T-cell (primary cell): ENCODE measurements at regions of chr1 and their contacts with region 1.

Region 1: GRCh38 chr1:19661721-19662228 is 2.9 kb upstream of the HTR6 start:
- DNase-seq: peak in 19 of 35 experiments; percentile 17 to 80 (median 42)
- ATAC-seq: peak in 2 of 4 experiments; percentile 21 to 24
- H3K4me3 ChIP-seq: no peak overlapping the region
- H3K4me3 Mint-ChIP-seq: no peak overlapping the region
- H3K27ac ChIP-seq: no peak overlapping the region
- H3K27ac Mint-ChIP-seq: peak overlapping the region in 1 of 2 donors; percentile 67
- H3K4me1 ChIP-seq: peaks cover 0 to 34% of the 10 kb centered on the region in 2 experiments
- H3K4me1 Mint-ChIP-seq: peaks cover 23 to 33% (median 28%) of the 10 kb centered on the region in 3 donors
- H3K27me3 ChIP-seq: peaks cover 5 to 41% of the 10 kb centered on the region in 2 experiments
- H3K27me3 Mint-ChIP-seq: peaks cover 5 to 14% of the 10 kb centered on the region in 2 donors

Region 2: GRCh38 chr1:19704247-19705113 is 42.7 kb after region 1 on chr1:
- CTCF ChIA-PET with region 1: interaction called, 49 to 60 read pairs
- POLR2A ChIA-PET with region 1: interaction called in 1 of 2 experiments, 5 read pairs
- DNase-seq: peak in 33 of 35 experiments; percentile 8 to 74 (median 43)
- ATAC-seq: peak; percentile 70 to 84 (median 76)
- H3K4me3 ChIP-seq: no peak overlapping the region
- H3K4me3 Mint-ChIP-seq: no peak overlapping the region
- H3K27ac ChIP-seq: no peak overlapping the region
- H3K27ac Mint-ChIP-seq: no peak overlapping the region
- H3K4me1 ChIP-seq: peaks cover 2 to 13% of the 10 kb centered on the region in 2 experiments
- H3K4me1 Mint-ChIP-seq: peaks cover 5 to 18% (median 9%) of the 10 kb centered on the region in 3 donors
- H3K27me3 ChIP-seq: no peaks in the 10 kb centered on the region
- H3K27me3 Mint-ChIP-seq: no peaks in the 10 kb centered on the region